ENCODE measurements at regions of chr1 and their contacts with region 1.

Region 1: DNA sequence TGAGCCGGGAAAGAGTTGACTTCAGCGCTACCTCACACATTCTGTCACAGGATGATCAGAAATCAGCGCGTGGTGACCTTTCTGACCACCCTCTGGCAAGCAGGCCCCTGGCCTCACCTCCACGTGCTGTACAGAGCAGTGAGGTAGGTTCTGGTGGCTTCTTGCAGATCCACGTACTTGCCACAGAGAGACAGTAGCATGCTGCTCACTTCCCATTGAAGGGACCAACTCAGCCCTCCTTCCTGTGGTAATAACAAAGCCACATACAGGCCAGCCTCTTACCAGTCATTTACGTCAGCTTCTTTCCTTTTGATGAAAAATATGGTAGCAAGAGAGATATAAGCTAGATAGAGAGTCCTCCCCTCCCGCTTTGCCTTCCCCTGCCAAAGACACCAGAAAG is 200.7 kb downstream of the CHRM3 start:
- DNase-seq: peak; percentile 75
- ATAC-seq: peak; percentile 100
- H3K4me3 Mint-ChIP-seq: no peak overlapping the region
- H3K27ac Mint-ChIP-seq: peak overlapping the region; percentile 39
- H3K4me1 Mint-ChIP-seq: peaks cover 20% of the 10 kb centered on the region
- H3K27me3 Mint-ChIP-seq: peaks cover 3% of the 10 kb centered on the region

Region 2: DNA sequence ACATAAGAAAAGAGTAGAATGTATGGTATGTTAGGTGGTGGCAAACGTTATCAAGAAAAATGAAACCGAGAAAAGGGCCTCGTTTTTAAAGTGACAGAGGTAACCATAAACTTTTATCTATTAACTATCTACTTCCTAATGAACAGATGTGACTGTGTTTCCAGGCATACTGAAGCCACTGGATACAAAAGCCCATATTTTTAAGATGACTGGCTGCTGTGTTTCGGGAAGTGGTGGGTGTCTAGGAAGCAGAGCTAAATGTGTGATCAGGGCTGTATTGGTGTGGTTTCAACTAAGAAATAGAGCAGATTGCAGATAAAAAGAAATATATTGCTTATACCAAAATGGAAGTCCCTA is 128.9 kb before region 1 on chr1:
- CTCF ChIA-PET with region 1: no interaction called
- POLR2A ChIA-PET with region 1: no interaction called
- DNase-seq: no peak
- ATAC-seq: no peak
- H3K4me3 Mint-ChIP-seq: peak overlapping the region; percentile 44
- H3K27ac Mint-ChIP-seq: no peak overlapping the region
- H3K4me1 Mint-ChIP-seq: peaks cover 1% of the 10 kb centered on the region
- H3K27me3 Mint-ChIP-seq: no peaks in the 10 kb centered on the region

Region 3: DNA sequence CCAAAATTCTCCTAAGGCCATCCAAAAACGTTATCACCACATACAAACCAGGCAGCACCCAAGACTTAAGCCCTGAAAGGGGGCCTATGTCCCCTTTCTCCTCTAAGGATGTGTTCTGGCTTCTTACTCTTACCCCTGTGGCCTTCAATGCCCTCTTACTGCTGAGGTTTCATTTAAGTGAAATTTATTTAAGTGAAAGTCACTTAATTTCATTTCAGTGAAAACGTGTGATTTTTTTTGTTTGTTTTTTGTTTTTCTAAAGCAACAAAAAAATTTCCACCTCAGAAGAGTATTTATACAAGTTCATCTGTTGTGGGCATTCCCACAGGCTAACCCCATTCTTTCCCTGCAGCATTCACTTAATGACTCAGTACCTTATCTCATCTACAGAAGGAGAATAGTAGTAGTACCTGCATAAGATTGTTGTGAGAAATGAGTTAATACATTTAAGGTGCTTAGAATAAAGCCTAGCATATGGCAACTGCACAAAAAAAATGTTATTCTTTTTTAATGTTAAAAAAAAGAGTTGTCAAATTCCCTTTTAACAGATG is 19.9 kb after region 1 on chr1:
- CTCF ChIA-PET with region 1: no interaction called
- POLR2A ChIA-PET with region 1: no interaction called
- DNase-seq: no peak
- ATAC-seq: no peak
- H3K4me3 Mint-ChIP-seq: no peak overlapping the region
- H3K27ac Mint-ChIP-seq: no peak overlapping the region
- H3K4me1 Mint-ChIP-seq: no peaks in the 10 kb centered on the region
- H3K27me3 Mint-ChIP-seq: no peaks in the 10 kb centered on the region

Region 4: GRCh38 chr1:239719642-239720258 is 132.7 kb after region 1 on chr1:
- CTCF ChIA-PET with region 1: interaction called, 18 read pairs
- POLR2A ChIA-PET with region 1: interaction called, 14 read pairs
- DNase-seq: peak; percentile 85
- ATAC-seq: peak; percentile 83
- H3K4me3 Mint-ChIP-seq: no peak overlapping the region
- H3K27ac Mint-ChIP-seq: peak overlapping the region; percentile 96
- H3K4me1 Mint-ChIP-seq: peaks cover 31% of the 10 kb centered on the region
- H3K27me3 Mint-ChIP-seq: no peaks in the 10 kb centered on the region

Region 5: GRCh38 chr1:239735111-239735510 is 148.0 kb after region 1 on chr1:
- CTCF ChIA-PET with region 1: no interaction called
- POLR2A ChIA-PET with region 1: no interaction called
- DNase-seq: no peak
- ATAC-seq: no peak
- H3K4me3 Mint-ChIP-seq: no peak overlapping the region
- H3K27ac Mint-ChIP-seq: no peak overlapping the region
- H3K4me1 Mint-ChIP-seq: peaks cover 6% of the 10 kb centered on the region
- H3K27me3 Mint-ChIP-seq: no peaks in the 10 kb centered on the region

Region 6: GRCh38 chr1:239802275-239802674 is 215.2 kb after region 1 on chr1:
- CTCF ChIA-PET with region 1: interaction called, 11 read pairs
- POLR2A ChIA-PET with region 1: no interaction called
- DNase-seq: no peak
- ATAC-seq: no peak
- H3K4me3 Mint-ChIP-seq: no peak overlapping the region
- H3K27ac Mint-ChIP-seq: no peak overlapping the region
- H3K4me1 Mint-ChIP-seq: peaks cover 3% of the 10 kb centered on the region
- H3K27me3 Mint-ChIP-seq: no peaks in the 10 kb centered on the region

Region 7: DNA sequence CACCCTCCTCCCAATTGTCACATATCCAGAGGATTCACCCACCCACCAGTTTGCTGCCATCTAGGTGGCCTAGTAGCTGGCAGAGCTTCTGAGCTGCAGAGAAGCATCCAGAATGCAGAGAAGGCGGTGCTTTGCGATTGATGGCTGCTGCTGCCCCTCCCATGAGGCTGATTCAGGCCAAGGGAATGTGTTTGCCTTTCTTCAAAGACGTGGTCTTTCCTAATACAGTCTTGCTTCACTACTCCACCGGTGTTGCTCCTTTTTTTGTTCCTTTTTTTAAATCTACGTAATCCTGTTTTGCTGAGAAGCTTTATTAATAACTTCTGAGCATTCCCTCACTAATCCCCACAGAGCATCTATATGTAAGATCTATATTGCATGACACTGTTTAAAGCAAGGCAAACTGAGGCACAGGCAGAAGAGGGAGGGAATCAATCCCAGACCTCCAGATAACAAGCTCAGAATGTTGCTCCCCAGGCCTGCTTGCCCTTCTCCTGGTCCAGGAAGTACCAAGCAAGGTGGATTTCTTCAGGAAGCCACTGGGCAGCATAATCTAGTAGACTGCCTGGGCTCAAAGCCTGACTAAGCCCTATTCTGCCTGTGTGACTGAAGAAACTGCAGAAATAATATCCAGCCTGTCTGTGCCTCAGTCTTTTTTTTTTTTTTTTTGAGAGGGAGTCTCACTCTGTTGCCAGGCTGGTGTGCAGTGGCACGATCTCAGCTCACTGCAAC is 229.2 kb after region 1 on chr1:
- CTCF ChIA-PET with region 1: interaction called, 15 read pairs
- POLR2A ChIA-PET with region 1: no interaction called
- DNase-seq: no peak
- ATAC-seq: no peak
- H3K4me3 Mint-ChIP-seq: no peak overlapping the region
- H3K27ac Mint-ChIP-seq: peak overlapping the region; percentile 2
- H3K4me1 Mint-ChIP-seq: peaks cover 10% of the 10 kb centered on the region
- H3K27me3 Mint-ChIP-seq: no peaks in the 10 kb centered on the region

Region 8: GRCh38 chr1:239898062-239898730 is 311.1 kb after region 1 on chr1:
- CTCF ChIA-PET with region 1: interaction called, 39 read pairs
- POLR2A ChIA-PET with region 1: no interaction called
- DNase-seq: peak; percentile 84
- ATAC-seq: peak; percentile 98
- H3K4me3 Mint-ChIP-seq: no peak overlapping the region
- H3K27ac Mint-ChIP-seq: no peak overlapping the region
- H3K4me1 Mint-ChIP-seq: peaks cover 3% of the 10 kb centered on the region
- H3K27me3 Mint-ChIP-seq: peaks cover 3% of the 10 kb centered on the region